IMR-90 (cell line): ENCODE measurements at regions of chr3 and their contacts with region 1.

Region 1: DNA sequence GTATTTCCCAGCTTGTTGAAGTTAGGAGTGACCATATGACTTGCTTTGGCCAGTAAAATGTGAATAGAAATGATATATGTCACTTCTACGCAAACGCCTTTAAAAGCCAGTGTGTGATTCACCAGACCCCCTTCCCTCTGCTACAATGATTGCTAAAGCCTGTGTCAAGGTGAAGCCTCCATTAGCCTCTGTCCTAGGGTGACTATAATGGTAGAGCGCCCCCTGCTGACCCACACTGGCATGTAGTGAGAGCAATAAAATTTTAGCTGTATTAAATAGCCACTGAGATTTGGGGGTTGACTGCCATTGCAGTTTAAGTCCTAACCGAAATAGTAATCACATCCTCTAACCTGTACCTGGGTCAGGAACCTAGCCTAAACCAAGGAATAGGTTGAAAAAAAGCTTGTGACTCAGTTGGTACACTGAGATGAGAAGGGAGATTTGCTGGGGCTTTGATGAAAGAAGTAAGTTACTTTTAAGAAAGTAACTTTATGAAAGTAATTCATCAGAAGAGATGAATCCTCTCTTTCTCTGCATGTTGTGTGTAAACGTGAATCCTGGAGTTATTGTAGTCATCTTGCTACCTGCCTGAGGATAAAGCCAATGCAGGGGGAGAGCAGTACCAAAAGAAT is 52.6 kb downstream of the GTF2E1 start:
- DNase-seq: peak; percentile 82
- ATAC-seq: peak; percentile 79
- H3K4me3 ChIP-seq: no peak overlapping the region
- H3K27ac ChIP-seq: no peak overlapping the region
- H3K4me1 ChIP-seq: peaks cover 8% of the 10 kb centered on the region
- H3K27me3 ChIP-seq: no peaks in the 10 kb centered on the region
- CTCF ChIP-seq: peak; percentile 91
- POLR2A ChIP-seq: no peak
- RAD21 ChIP-seq: peak; percentile 87

Region 2: GRCh38 chr3:119944091-119944490 is 851.0 kb before region 1 on chr3:
- CTCF ChIA-PET with region 1: no interaction called
- POLR2A ChIA-PET with region 1: no interaction called
- dilution Hi-C with region 1: no loop called
- in situ Hi-C with region 1: no loop called
- intact Hi-C with region 1: no loop called
- DNase-seq: no peak
- ATAC-seq: no peak
- H3K4me3 ChIP-seq: no peak overlapping the region
- H3K27ac ChIP-seq: no peak overlapping the region
- H3K4me1 ChIP-seq: no peaks in the 10 kb centered on the region
- H3K27me3 ChIP-seq: no peaks in the 10 kb centered on the region
- CTCF ChIP-seq: no peak
- POLR2A ChIP-seq: no peak
- RAD21 ChIP-seq: no peak

Region 3: DNA sequence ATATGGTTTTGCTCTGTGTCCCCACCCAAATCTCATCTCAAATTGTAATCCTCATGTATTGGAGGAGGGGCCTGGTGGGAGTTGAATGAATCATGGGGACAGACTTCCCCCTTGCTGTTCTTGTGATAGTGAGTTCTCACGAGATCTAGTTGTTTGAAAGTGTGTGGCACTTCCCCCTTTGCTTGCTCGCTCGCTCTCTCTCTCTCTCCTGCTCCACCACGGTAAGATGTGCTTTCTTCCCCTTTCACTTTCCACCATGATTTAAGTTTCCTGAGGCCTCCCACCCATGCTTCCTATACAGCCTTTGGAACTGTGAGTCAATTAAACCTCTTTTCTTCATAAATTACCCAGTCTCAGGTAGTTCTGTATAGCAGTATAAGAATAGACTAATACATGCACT is 761.5 kb before region 1 on chr3:
- CTCF ChIA-PET with region 1: no interaction called
- POLR2A ChIA-PET with region 1: no interaction called
- dilution Hi-C with region 1: no loop called
- in situ Hi-C with region 1: no loop called
- intact Hi-C with region 1: no loop called
- DNase-seq: no peak
- ATAC-seq: no peak
- H3K4me3 ChIP-seq: no peak overlapping the region
- H3K27ac ChIP-seq: no peak overlapping the region
- H3K4me1 ChIP-seq: no peaks in the 10 kb centered on the region
- H3K27me3 ChIP-seq: no peaks in the 10 kb centered on the region
- CTCF ChIP-seq: no peak
- POLR2A ChIP-seq: no peak
- RAD21 ChIP-seq: no peak

Region 4: DNA sequence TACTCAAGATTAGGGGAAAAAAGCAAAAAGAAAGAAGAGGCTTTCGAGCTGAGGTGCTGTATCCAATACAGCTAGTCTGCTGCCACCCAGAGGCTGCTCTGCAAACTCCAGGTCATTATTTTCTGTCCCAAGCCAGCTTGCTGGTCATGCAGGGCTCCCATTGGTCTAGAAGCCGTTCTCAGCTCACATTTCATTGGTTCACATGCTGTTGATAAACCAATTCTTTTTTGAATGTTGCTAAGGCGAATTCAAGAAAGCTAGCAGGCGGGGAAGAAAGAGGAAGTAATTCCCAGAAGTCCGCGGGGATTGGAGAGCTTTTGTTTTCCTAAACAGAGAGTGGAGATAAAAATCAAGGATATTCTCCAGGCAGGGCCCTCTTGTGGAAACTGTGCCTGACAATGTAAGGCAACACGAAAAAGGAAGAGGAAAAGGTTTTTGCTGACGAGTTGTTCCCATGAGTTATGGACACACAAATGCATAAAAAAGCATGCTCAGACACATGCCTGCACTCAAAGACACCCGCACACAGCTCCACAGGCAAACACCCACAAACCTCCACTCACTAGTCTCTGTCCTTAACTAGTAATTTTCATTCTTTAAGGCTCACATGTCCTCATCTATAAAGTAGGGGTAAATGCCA is 377.7 kb before region 1 on chr3:
- CTCF ChIA-PET with region 1: no interaction called
- POLR2A ChIA-PET with region 1: no interaction called
- dilution Hi-C with region 1: no loop called
- in situ Hi-C with region 1: no loop called
- intact Hi-C with region 1: loop called (anchors 10 kb)
- DNase-seq: peak; percentile 99
- ATAC-seq: peak; percentile 90
- H3K4me3 ChIP-seq: no peak overlapping the region
- H3K27ac ChIP-seq: peak overlapping the region; percentile 79; the same call in 1 of the 2 replicates
- H3K4me1 ChIP-seq: peaks cover 29% of the 10 kb centered on the region
- H3K27me3 ChIP-seq: no peaks in the 10 kb centered on the region
- CTCF ChIP-seq: peak; percentile 87
- POLR2A ChIP-seq: no peak
- RAD21 ChIP-seq: peak; percentile 66

Region 5: DNA sequence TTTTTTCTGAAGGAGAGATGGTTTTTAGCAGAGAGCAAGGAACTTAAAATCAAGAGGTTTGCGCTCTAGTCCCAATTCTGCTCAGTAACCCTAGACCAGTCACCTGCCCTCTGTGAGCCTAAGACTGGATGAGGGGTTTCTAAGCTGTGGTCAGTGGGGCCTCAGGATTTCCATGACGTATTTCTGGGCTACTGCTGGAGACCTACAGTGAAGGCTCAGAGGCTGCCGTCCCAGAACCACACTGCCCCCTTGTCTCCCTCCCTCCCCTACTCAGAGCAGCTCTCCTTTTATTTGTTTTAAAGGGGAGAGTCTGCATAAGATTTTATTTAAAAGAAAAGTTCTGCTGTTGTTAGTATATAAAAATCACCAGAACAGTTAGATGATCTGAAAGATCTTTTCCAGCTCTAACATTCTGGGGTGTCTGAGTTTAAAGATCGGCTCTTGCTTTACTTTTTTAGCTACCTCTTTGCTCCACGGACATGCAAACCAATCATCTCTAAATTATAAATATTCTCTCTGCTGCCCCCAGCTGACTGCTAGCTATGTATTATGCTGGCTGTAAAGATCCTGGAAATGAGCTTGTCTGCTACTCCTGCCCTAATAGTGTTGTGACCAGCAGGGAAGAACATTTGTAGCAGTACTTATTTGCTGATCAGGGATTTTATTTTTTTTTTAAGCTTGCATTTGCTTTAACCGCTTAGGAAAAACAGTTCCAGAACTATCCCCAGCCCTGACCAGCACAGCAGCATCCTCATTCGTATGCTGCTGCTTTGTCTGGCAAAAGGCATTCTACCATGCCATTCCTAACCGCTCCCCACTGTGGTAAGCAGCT is 227.5 kb before region 1 on chr3:
- CTCF ChIA-PET with region 1: interaction called, 18 read pairs
- POLR2A ChIA-PET with region 1: no interaction called
- dilution Hi-C with region 1: no loop called
- in situ Hi-C with region 1: loop called (anchors 5 kb)
- intact Hi-C with region 1: no loop called
- DNase-seq: peak; percentile 47
- ATAC-seq: peak; percentile 93
- H3K4me3 ChIP-seq: 0 out of 2 replicates have a peak overlapping the region, but pooled peaks have one; percentile 11
- H3K27ac ChIP-seq: no peak overlapping the region
- H3K4me1 ChIP-seq: 0 out of 2 replicates have a peak, but pooled peaks cover 2% of the 10 kb centered on the region
- H3K27me3 ChIP-seq: no peaks in the 10 kb centered on the region
- CTCF ChIP-seq: peak; percentile 46
- POLR2A ChIP-seq: no peak
- RAD21 ChIP-seq: peak; percentile 34; the same call in 1 of the 2 replicates

Region 6: GRCh38 chr3:120742198-120742849 is 52.8 kb before region 1 on chr3 and contains the starts of genes GTF2E1 and RABL3:
- CTCF ChIA-PET with region 1: no interaction called
- POLR2A ChIA-PET with region 1: no interaction called
- dilution Hi-C with region 1: no loop called
- in situ Hi-C with region 1: no loop called
- intact Hi-C with region 1: loop called (anchors 2 kb)
- DNase-seq: peak; percentile 100
- ATAC-seq: peak; percentile 98
- H3K4me3 ChIP-seq: peak within 1 kb of the TSS; percentile 69
- H3K27ac ChIP-seq: peak within 1 kb of the TSS; percentile 91
- H3K4me1 ChIP-seq: peaks cover 4% of the 10 kb centered on the region
- H3K27me3 ChIP-seq: no peaks in the 10 kb centered on the region
- CTCF ChIP-seq: no peak
- POLR2A ChIP-seq: peak; percentile 86
- RAD21 ChIP-seq: no peak
- total RNA-seq, gene GTF2E1: 18.5 and 26.9 TPM in 2 replicates
- total RNA-seq, gene RABL3: 17.0 and 31.1 TPM in 2 replicates